Natural killer cell (primary cell): ENCODE measurements at regions of chr11 and their contacts with region 1.

Region 1: GRCh38 chr11:119030329-119031049 is at the start of gene SLC37A4:
- DNase-seq: peak; percentile 98 to 99
- ATAC-seq: peak; percentile 96 to 98 (median 97)
- H3K4me3 ChIP-seq: peak within 1 kb of the TSS; percentile 74
- H3K4me3 Mint-ChIP-seq: peak within 1 kb of the TSS; percentile 84
- H3K27ac ChIP-seq: peak within 1 kb of the TSS; percentile 55
- H3K27ac Mint-ChIP-seq: peak within 1 kb of the TSS; percentile 14 to 85
- H3K4me1 ChIP-seq: peaks cover 13% of the 10 kb centered on the region
- H3K4me1 Mint-ChIP-seq: peaks cover under 1 to 16% of the 10 kb centered on the region in 2 donors
- H3K27me3 ChIP-seq: no peaks in the 10 kb centered on the region
- H3K27me3 Mint-ChIP-seq: no peaks in the 10 kb centered on the region
- CTCF ChIP-seq: peak; percentile 82
- total RNA-seq, gene SLC37A4: 4.6 to 7.7 (median 6.5) TPM

Region 2: DNA sequence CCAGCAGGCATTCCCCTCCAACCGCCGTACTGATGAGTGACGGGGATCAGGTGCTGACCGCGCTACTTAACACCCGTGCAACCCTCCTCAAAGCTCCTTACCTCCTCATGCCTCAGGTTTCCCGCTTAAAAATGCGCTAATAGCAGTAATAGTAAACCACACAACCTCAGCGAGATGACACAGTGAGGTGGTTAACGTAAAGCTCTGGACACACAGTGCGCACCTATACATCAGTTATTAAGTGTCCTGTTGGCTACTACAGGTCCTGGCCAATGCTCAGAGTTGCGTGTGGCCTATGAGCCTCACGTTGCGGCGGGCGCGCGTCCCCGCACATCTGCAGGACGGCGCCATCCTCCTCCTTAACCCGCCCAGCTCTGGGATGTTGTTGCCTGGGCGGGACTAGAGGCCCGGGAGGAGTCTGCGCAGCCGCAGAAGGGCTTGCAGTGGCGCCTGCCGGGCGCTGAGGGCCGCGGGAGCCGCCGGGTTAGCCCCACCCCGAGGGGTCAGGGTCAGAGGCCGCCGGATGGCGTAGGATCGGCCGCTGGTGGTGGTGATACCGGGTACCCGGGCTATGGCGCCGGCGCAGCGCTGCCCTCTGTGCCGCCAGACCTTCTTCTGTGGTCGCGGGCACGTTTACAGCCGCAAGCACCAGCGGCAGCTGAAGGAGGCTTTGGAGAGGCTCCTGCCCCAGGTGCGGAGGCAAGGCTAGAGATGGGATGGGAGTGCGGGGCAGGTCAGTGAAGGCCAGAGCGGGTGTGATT is 32.7 kb before region 1 on chr11 and contains the start of gene CENATAC:
- intact Hi-C with region 1: loop called (anchors 1 kb)
- DNase-seq: peak; percentile 91 to 97
- ATAC-seq: peak; percentile 92 to 98 (median 95)
- H3K4me3 ChIP-seq: peak within 1 kb of the TSS; percentile 88
- H3K4me3 Mint-ChIP-seq: peak within 1 kb of the TSS; percentile 97
- H3K27ac ChIP-seq: peak within 1 kb of the TSS; percentile 93
- H3K27ac Mint-ChIP-seq: peak within 1 kb of the TSS; percentile 94
- H3K4me1 ChIP-seq: peaks cover 23% of the 10 kb centered on the region
- H3K4me1 Mint-ChIP-seq: peaks cover 30 to 33% of the 10 kb centered on the region in 2 donors
- H3K27me3 ChIP-seq: no peaks in the 10 kb centered on the region
- H3K27me3 Mint-ChIP-seq: no peaks in the 10 kb centered on the region
- CTCF ChIP-seq: no peak
- total RNA-seq, gene CENATAC: 121 to 143 (median 122) TPM